H1 (cell line): ENCODE measurements at regions of chr3 and their contacts with region 1.

Region 1: GRCh38 chr3:9503283-9503682 is 50.3 kb downstream of the LHFPL4 start:
- DNase-seq: peak; percentile 83 to 97
- H3K4me3 ChIP-seq: no peak overlapping the region
- H3K27ac ChIP-seq: no peak overlapping the region
- H3K4me1 ChIP-seq: peaks cover 0 to 6% (median 3%) of the 10 kb centered on the region in 4 experiments; a peak in 4 of 7 replicates
- H3K27me3 ChIP-seq: peaks cover 0 to 10% (median 5%) of the 10 kb centered on the region in 4 experiments; a peak in 4 of 7 replicates
- CTCF ChIP-seq: peak in 2 of 3 experiments; percentile 91 to 96; a peak in 3 of 4 replicates
- EP300 ChIP-seq: no peak
- POLR2A ChIP-seq: no peak
- RAD21 ChIP-seq: peak; percentile 97 to 99

Region 2: GRCh38 chr3:9536212-9536611 is 32.9 kb after region 1 on chr3:
- CTCF ChIA-PET with region 1: interaction called, 17 read pairs
- POLR2A ChIA-PET with region 1: interaction called, 3 read pairs
- DNase-seq: no peak
- H3K4me3 ChIP-seq: no peak overlapping the region
- H3K27ac ChIP-seq: no peak overlapping the region
- H3K4me1 ChIP-seq: no peaks in the 10 kb centered on the region
- H3K27me3 ChIP-seq: no peaks in the 10 kb centered on the region
- CTCF ChIP-seq: no peak
- EP300 ChIP-seq: no peak
- POLR2A ChIP-seq: no peak
- RAD21 ChIP-seq: no peak

Region 3: GRCh38 chr3:9638155-9638554 is 134.9 kb after region 1 on chr3:
- CTCF ChIA-PET with region 1: interaction called, 15 read pairs
- POLR2A ChIA-PET with region 1: no interaction called
- DNase-seq: no peak
- H3K4me3 ChIP-seq: no peak overlapping the region
- H3K27ac ChIP-seq: no peak overlapping the region
- H3K4me1 ChIP-seq: no peaks in the 10 kb centered on the region
- H3K27me3 ChIP-seq: no peaks in the 10 kb centered on the region
- CTCF ChIP-seq: no peak
- EP300 ChIP-seq: no peak
- POLR2A ChIP-seq: no peak
- RAD21 ChIP-seq: no peak

Region 4: DNA sequence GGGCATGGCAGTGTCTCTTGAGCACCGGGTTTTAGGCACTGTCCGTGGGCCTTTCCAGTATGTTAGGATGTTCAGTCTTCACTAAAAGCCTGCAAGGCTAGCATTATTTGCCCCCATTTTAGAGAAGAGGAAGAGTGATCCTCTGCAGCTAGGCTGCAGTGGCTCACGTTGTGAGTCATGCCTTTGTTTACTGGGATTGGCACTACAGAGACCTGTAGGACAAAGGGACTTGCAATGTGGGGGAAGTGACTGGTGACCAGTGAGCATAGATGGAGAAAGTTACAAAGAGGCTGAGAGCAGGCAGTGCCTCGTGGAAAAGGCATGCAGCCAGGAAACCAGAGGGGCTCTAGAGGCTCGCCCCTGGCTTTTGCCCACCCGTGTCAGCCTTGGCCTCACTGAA is 173.5 kb after region 1 on chr3:
- CTCF ChIA-PET with region 1: interaction called, 16 read pairs
- POLR2A ChIA-PET with region 1: no interaction called
- DNase-seq: no peak
- H3K4me3 ChIP-seq: no peak overlapping the region
- H3K27ac ChIP-seq: no peak overlapping the region
- H3K4me1 ChIP-seq: no peaks in the 10 kb centered on the region
- H3K27me3 ChIP-seq: no peaks in the 10 kb centered on the region
- CTCF ChIP-seq: no peak
- EP300 ChIP-seq: no peak
- POLR2A ChIP-seq: no peak
- RAD21 ChIP-seq: no peak

Region 5: GRCh38 chr3:9731206-9732079 is 228.2 kb after region 1 on chr3 and contains the start of gene BRPF1:
- CTCF ChIA-PET with region 1: interaction called, 109 read pairs
- POLR2A ChIA-PET with region 1: no interaction called
- DNase-seq: peak; percentile 96 to 97
- H3K4me3 ChIP-seq: peak within 1 kb of the TSS; percentile 87 to 94 (median 90)
- H3K27ac ChIP-seq: peak within 1 kb of the TSS; percentile 100
- H3K4me1 ChIP-seq: peaks cover 0 to 8% (median 6%) of the 10 kb centered on the region in 4 experiments; a peak in 6 of 7 replicates
- H3K27me3 ChIP-seq: no peaks in the 10 kb centered on the region
- CTCF ChIP-seq: no peak
- EP300 ChIP-seq: peak in 1 of 2 experiments; percentile 94; a peak in 2 of 3 replicates
- POLR2A ChIP-seq: peak in 1 of 2 experiments; percentile 76; a peak in 2 of 3 replicates
- RAD21 ChIP-seq: no peak
- total RNA-seq, gene BRPF1: 21.7 and 27.7 TPM in 2 replicates